PC-9 (cell line): ENCODE measurements at regions of chr15 and their contacts with region 1.

Region 1: GRCh38 chr15:50145451-50145872 is 26.4 kb upstream of the ATP8B4 start:
- DNase-seq: peak in 1 of 2 experiments; percentile 60
- H3K4me3 ChIP-seq: no peak overlapping the region
- H3K27ac ChIP-seq: no peak overlapping the region
- H3K4me1 ChIP-seq: peaks cover 26% of the 10 kb centered on the region
- H3K27me3 ChIP-seq: no peaks in the 10 kb centered on the region
- CTCF ChIP-seq: peak; percentile 70

Region 2: GRCh38 chr15:48352474-48353072 is 1792.9 kb before region 1 on chr15:
- CTCF ChIA-PET with region 1: no interaction called
- POLR2A ChIA-PET with region 1: no interaction called
- intact Hi-C with region 1: loop called (anchors 10 kb)
- DNase-seq: peak; percentile 44 to 61
- H3K4me3 ChIP-seq: no peak overlapping the region
- H3K27ac ChIP-seq: no peak overlapping the region
- H3K4me1 ChIP-seq: no peaks in the 10 kb centered on the region
- H3K27me3 ChIP-seq: no peaks in the 10 kb centered on the region
- CTCF ChIP-seq: peak; percentile 79

Region 3: GRCh38 chr15:49235446-49236124 is 909.9 kb before region 1 on chr15:
- CTCF ChIA-PET with region 1: interaction called, 3 read pairs
- POLR2A ChIA-PET with region 1: no interaction called
- intact Hi-C with region 1: loop called (anchors 2 kb)
- DNase-seq: peak in 1 of 2 experiments; percentile 30
- H3K4me3 ChIP-seq: no peak overlapping the region
- H3K27ac ChIP-seq: no peak overlapping the region
- H3K4me1 ChIP-seq: no peaks in the 10 kb centered on the region
- H3K27me3 ChIP-seq: no peaks in the 10 kb centered on the region
- CTCF ChIP-seq: peak; percentile 71

Region 4: GRCh38 chr15:50182219-50183013 is 37.0 kb after region 1 on chr15:
- CTCF ChIA-PET with region 1: no interaction called
- POLR2A ChIA-PET with region 1: no interaction called
- intact Hi-C with region 1: loop called (anchors 2 kb)
- DNase-seq: peak; percentile 34 to 43
- H3K4me3 ChIP-seq: peak overlapping the region; percentile 93
- H3K27ac ChIP-seq: peak overlapping the region; percentile 2; the same call in 1 of the 2 replicates
- H3K4me1 ChIP-seq: peaks cover 9% of the 10 kb centered on the region
- H3K27me3 ChIP-seq: no peaks in the 10 kb centered on the region
- CTCF ChIP-seq: 0 out of 2 replicates have a peak, but pooled peaks have one; percentile 4

Region 5: DNA sequence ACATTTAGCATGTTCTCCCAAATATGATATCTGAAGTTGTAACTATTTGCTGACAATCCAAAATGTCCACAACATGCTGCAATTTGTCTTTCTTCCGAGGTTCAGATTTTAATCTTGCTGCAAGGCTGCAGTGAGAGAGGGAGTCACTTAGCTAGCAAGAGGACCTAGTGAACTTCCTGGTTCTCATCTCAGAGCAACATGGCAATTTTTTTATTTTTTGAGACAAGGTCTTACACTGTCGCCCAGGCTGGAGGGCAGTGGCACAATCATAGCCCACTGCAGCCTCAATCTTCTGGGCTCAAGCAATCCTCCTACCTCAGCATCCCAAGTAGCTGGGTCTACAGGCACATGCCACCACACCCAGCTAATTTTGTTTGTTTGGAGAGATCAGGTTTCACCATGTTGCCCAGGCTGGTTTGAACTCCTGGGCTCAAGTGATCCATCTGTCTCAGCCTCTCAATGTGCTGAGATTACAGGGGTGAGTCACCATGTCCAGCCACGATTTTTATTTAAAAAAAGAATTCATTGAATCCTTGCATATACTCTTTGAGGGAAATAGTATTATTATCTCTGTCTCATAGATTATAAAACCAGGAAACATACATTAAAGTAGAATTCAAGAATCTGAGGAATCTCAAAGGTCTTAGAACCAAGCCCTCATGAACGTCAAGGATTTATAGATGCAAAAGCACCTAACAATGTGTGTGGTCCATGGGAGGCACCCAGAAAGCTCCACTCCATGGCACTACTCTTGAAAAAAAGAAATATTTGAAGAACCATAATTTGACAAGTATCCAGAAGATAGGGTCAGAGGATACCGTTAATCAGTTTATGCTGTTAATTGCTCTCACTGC is 111.0 kb after region 1 on chr15:
- CTCF ChIA-PET with region 1: interaction called, 3 read pairs
- POLR2A ChIA-PET with region 1: no interaction called
- intact Hi-C with region 1: loop called (anchors 5 kb)
- DNase-seq: peak; percentile 54 to 84
- H3K4me3 ChIP-seq: no peak overlapping the region
- H3K27ac ChIP-seq: peak overlapping the region; percentile 17
- H3K4me1 ChIP-seq: peaks cover 32% of the 10 kb centered on the region
- H3K27me3 ChIP-seq: no peaks in the 10 kb centered on the region
- CTCF ChIP-seq: no peak

Region 6: DNA sequence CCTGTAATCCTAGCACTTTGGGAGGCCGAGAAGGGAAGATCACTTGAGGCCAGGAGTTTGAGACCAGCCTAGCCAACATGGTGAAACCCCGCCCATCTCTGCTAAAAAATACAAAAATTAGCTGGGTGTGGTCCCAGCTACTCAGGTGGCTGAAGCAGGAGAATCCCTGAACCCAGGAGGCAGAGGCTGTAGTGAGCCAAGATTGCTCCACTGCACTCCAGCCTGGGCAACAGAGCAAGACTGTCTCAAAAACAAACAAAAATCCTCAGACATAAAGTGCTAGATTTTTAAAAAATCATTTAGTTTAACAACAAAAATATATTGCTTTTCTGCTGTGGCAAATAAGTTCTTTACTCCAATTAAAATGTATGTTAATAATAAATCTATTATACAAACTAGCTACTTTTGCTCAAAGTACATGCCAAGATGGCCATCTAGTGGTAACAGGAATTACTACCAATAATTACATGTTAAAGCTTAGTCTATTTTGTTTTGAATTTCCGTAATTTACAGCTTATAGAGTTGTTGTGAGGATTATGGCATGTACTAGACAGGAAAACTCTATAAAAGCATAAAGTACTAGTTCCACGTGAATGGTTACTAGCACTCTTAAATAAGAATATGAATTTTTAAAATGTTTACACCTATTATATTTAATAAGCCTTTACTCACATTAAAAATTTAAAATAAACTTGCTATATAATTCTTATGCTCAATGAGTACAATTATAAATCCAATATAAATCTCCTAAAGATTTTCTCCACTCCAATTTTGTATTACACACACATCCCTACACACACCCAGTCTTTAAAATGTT is 170.6 kb after region 1 on chr15:
- CTCF ChIA-PET with region 1: interaction called, 18 read pairs
- POLR2A ChIA-PET with region 1: no interaction called
- intact Hi-C with region 1: loop called (anchors 1 kb)
- DNase-seq: peak in 1 of 2 experiments; percentile 52
- H3K4me3 ChIP-seq: no peak overlapping the region
- H3K27ac ChIP-seq: no peak overlapping the region
- H3K4me1 ChIP-seq: 0 out of 2 replicates have a peak, but pooled peaks cover 9% of the 10 kb centered on the region
- H3K27me3 ChIP-seq: no peaks in the 10 kb centered on the region
- CTCF ChIP-seq: peak; percentile 82